Panc1 (cell line): ENCODE measurements at regions of chr10 and their contacts with region 1.

Region 1: GRCh38 chr10:126316985-126317384 is 71.3 kb downstream of the ADAM12 start:
- DNase-seq: no peak
- ATAC-seq: no peak
- H3K4me3 ChIP-seq: no peak overlapping the region
- H3K27ac ChIP-seq: no peak overlapping the region
- H3K4me1 ChIP-seq: no peaks in the 10 kb centered on the region
- H3K27me3 ChIP-seq: no peaks in the 10 kb centered on the region
- CTCF ChIP-seq: no peak

Region 2: DNA sequence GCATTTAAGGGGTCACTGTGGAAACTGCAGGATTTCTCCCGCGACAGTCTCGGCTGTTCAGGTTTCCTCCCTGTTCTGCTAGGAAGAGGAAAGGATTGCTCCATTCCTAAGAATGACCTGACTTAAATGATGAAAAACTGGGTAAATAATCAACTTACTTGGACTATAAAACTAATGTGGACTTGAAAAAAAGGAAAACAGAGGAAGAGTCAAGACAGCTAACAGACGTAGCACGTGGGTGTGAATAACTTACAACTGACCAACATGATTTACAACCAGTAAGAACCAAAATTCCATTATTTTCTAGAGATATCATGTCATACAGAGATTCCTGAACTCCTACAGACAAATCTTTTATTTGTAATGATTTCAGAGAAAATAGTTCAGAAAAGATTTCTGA is 22.5 kb before region 1 on chr10:
- CTCF ChIA-PET with region 1: no interaction called
- POLR2A ChIA-PET with region 1: interaction called, 10 read pairs
- in situ Hi-C with region 1: no loop called
- intact Hi-C with region 1: no loop called
- DNase-seq: no peak
- ATAC-seq: no peak
- H3K4me3 ChIP-seq: no peak overlapping the region
- H3K27ac ChIP-seq: no peak overlapping the region
- H3K4me1 ChIP-seq: no peaks in the 10 kb centered on the region
- H3K27me3 ChIP-seq: no peaks in the 10 kb centered on the region
- CTCF ChIP-seq: no peak